Activated naive CD4-positive, alpha-beta T cell treated with anti-CD3 and anti-CD28 coated beads for 36 hours (primary cell): ENCODE measurements at regions of chr7 and their contacts with region 1.

Region 1: DNA sequence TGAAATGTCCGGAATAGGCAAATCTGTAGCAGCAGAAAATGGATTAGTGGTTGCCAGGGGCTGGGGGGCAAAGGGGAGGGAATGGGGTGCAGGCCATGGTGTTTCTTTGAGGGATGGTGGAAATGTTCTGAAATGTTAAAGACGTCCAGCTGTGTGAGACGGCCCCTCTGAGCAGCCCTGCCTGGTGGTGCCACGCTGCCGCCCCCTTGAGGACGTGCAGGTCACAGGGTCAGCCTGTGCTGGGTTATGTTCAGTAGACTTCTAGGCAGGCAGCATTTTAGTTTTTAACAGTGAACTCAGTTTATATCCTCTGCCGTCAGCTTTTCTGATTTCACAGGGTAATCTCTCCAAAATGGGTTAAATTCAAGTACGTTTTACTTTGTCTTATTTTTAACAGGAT is 9.4 kb downstream of the NUB1 start:
- DNase-seq: peak; percentile 70
- H3K4me3 Mint-ChIP-seq: peak overlapping the region; percentile 17
- H3K27ac Mint-ChIP-seq: peak overlapping the region; percentile 91
- H3K4me1 Mint-ChIP-seq: peaks cover 51% of the 10 kb centered on the region
- H3K27me3 Mint-ChIP-seq: no peaks in the 10 kb centered on the region

Region 2: DNA sequence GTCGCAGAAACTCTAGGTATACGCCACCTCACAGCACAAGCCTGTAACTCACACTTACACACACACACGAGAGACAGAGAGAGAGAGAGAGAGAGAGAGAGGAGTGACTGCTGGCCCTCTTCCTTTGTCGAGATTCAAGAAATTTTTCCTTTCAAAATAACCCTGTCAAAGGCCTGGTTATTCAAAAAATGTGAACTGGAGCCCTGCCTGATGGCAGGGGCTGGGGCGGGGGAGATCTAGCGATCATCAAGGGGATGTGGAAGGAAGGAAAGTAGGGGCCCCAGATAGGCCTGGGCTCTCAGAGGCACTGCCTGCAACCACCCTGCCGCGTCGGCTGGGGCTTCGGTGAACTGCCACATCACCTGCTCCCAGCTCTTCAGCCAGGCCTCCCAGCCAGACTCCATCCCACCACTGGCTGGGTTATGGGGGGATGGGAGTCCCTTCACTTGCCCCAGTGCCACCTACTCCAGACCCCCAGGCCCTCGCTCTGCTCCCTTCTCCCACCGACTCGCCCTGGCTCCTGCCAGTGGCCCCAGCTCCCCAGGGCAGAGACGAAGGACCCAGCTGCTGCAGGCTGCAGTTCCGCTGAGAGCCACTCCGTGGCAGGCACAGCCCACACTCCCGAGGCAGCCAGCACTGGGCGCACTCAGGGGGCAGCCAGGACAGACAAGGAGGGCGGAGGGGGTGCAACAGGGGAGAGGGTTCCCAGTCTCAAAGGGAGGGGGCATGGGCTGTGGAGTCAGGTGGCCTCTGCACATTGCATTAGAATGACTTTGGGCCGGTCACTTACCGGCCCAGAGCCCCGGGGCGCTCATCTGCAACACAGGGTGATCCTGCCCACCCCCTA is 388.3 kb before region 1 on chr7:
- CTCF ChIA-PET with region 1: no interaction called
- intact Hi-C with region 1: no loop called
- DNase-seq: peak; percentile 68
- H3K4me3 Mint-ChIP-seq: no peak overlapping the region
- H3K27ac Mint-ChIP-seq: no peak overlapping the region
- H3K4me1 Mint-ChIP-seq: peaks cover 14% of the 10 kb centered on the region
- H3K27me3 Mint-ChIP-seq: peaks cover 16% of the 10 kb centered on the region

Region 3: DNA sequence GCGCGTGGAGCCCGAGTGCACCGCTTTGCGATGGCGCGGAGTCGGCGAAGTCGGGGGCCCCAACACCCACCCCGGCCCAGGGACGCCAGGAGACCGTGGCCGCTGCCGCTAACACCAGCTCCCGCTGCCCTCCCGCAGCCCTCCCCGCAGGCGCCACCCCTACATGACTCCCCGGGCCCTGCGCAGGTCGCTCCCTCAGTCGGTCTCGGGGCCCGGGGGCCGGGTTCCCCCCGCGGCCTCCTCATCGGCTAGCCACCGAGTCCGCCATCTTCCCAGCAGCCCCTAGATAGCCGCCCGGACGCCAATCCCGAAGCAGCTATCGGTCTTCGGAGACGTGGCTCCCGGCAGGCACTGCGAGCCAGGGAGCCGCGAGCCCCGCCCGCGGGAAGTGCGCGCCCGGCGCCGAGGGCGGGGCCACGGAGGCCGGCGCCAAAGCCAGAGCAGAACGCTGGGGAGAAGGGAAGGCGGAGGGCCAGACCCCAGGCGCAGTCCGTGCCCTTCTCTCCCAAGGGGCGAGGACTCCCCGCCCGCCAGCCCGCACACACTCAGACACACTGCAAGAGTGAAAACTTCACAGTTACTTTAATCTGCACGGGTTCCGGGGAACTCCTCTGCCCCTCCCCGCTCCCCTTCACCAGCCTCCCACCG is 270.4 kb before region 1 on chr7 and contains the start of gene FASTK:
- CTCF ChIA-PET with region 1: no interaction called
- intact Hi-C with region 1: loop called (anchors 5 kb)
- DNase-seq: peak; percentile 93
- H3K4me3 Mint-ChIP-seq: peak within 1 kb of the TSS; percentile 86
- H3K27ac Mint-ChIP-seq: peak within 1 kb of the TSS; percentile 73
- H3K4me1 Mint-ChIP-seq: peaks cover 36% of the 10 kb centered on the region
- H3K27me3 Mint-ChIP-seq: peaks cover 7% of the 10 kb centered on the region
- total RNA-seq, gene FASTK: 43.6 to 45.7 TPM

Region 4: DNA sequence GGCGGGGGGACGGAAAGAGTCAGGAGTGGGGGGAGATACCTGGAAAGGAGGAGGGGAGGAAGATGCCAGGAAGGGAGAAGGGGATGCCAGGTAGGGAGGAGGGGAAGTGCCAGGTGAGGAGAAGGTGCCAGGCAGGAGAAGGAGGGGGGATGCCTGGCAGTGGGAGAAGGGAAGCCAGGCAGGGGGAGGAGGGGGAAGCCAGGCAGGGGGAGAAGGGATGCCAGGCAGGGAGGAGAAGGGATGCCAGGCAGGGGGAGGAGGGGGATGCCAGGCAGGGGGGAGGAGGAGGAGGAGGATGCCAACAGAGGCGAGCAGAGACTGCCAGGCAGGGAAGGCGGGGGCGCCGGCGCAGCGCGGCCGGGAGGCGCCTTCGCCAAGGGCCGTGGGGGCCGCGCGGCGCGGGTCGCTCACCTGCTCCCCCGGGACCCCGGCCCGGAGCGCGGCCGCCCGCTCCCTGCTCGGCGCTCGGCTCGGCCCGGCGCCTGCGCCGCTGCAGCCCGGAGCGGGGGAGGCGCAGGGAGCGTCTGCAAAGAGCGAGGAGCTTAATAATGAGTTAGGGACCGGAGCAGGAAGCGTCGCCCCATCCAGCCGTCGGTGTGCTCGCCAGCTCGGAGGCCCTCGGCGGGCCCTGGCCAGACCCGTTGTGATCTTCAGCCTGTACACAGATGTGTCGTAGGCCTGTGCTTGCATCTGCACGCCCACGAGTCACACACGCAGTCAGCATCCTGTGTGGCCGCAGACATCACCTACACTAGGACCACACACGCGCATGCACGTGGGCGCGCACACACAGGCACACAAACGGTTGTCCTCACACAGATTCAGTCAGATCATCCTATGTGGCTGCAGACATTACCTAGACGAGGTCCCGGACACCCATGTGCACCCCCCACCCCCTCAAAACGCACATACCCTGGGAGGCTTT is 74.1 kb before region 1 on chr7:
- CTCF ChIA-PET with region 1: no interaction called
- intact Hi-C with region 1: loop called (anchors 2 kb)
- DNase-seq: peak; percentile 74
- H3K4me3 Mint-ChIP-seq: peak overlapping the region; percentile 61
- H3K27ac Mint-ChIP-seq: no peak overlapping the region
- H3K4me1 Mint-ChIP-seq: peaks cover 17% of the 10 kb centered on the region
- H3K27me3 Mint-ChIP-seq: no peaks in the 10 kb centered on the region

Region 5: GRCh38 chr7:151368136-151368571 is 17.1 kb after region 1 on chr7:
- CTCF ChIA-PET with region 1: interaction called, 23 read pairs
- intact Hi-C with region 1: no loop called
- DNase-seq: peak; percentile 86
- H3K4me3 Mint-ChIP-seq: no peak overlapping the region
- H3K27ac Mint-ChIP-seq: no peak overlapping the region
- H3K4me1 Mint-ChIP-seq: peaks cover 7% of the 10 kb centered on the region
- H3K27me3 Mint-ChIP-seq: no peaks in the 10 kb centered on the region

Region 6: GRCh38 chr7:151631968-151632749 is 281.1 kb after region 1 on chr7:
- CTCF ChIA-PET with region 1: no interaction called
- intact Hi-C with region 1: loop called (anchors 1 kb)
- DNase-seq: peak; percentile 87
- H3K4me3 Mint-ChIP-seq: peak overlapping the region; percentile 95
- H3K27ac Mint-ChIP-seq: peak overlapping the region; percentile 99
- H3K4me1 Mint-ChIP-seq: peaks cover 23% of the 10 kb centered on the region
- H3K27me3 Mint-ChIP-seq: no peaks in the 10 kb centered on the region

Region 7: GRCh38 chr7:151954866-151955820 is 604.1 kb after region 1 on chr7:
- CTCF ChIA-PET with region 1: no interaction called
- intact Hi-C with region 1: no loop called
- DNase-seq: no peak
- H3K4me3 Mint-ChIP-seq: no peak overlapping the region
- H3K27ac Mint-ChIP-seq: no peak overlapping the region
- H3K4me1 Mint-ChIP-seq: no peaks in the 10 kb centered on the region
- H3K27me3 Mint-ChIP-seq: no peaks in the 10 kb centered on the region

Region 8: DNA sequence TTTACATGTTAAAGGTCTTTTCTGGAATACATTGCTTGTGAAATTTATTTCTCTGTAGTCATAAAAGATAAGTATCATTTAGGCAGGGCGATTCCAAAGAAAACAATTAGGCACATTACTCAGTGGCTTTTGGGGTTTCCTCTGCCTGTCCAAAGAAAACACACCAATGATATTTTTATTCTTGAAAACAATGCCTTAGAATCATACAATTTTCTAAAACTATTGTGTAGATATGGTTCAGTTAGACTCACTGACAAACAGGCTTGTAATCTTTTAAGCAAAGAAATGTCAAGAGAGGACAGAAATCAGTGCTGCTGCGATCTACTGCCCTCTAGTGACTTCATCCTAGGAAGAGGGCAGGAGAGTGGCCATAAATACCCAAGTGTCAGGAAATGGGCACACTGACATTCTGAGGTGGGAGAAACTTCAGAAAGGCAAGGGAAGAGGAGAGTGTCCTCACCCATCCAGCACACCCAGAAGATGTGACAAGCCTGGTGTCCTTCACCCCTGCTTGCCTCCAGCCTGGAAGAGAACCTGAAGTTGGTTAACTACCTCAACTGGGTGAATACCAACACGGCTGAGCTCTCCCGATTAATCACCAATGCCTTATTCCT is 794.9 kb after region 1 on chr7:
- CTCF ChIA-PET with region 1: no interaction called
- intact Hi-C with region 1: loop called (anchors 10 kb)
- DNase-seq: peak; percentile 62
- H3K4me3 Mint-ChIP-seq: no peak overlapping the region
- H3K27ac Mint-ChIP-seq: peak overlapping the region; percentile 87
- H3K4me1 Mint-ChIP-seq: peaks cover 40% of the 10 kb centered on the region
- H3K27me3 Mint-ChIP-seq: no peaks in the 10 kb centered on the region